Astrocyte of the cerebellum (primary cell): ENCODE measurements at regions of chr14 and their contacts with region 1.

Region 1: GRCh38 chr14:63800651-63801375 is 52.0 kb upstream of the SYNE2 start:
- DNase-seq: no peak
- H3K4me3 ChIP-seq: no peak overlapping the region
- CTCF ChIP-seq: no peak

Region 2: GRCh38 chr14:63533474-63533873 is 267.3 kb before region 1 on chr14:
- in situ Hi-C with region 1: no loop called
- DNase-seq: no peak
- H3K4me3 ChIP-seq: no peak overlapping the region
- CTCF ChIP-seq: no peak

Region 3: GRCh38 chr14:64294672-64295413 is 494.0 kb after region 1 on chr14:
- in situ Hi-C with region 1: loop called (anchors 25 kb)
- DNase-seq: no peak
- H3K4me3 ChIP-seq: peak overlapping the region; percentile 39
- CTCF ChIP-seq: peak; percentile 78